GM12878 (cell line): ENCODE measurements at regions of chr3 and their contacts with region 1.

Region 1: DNA sequence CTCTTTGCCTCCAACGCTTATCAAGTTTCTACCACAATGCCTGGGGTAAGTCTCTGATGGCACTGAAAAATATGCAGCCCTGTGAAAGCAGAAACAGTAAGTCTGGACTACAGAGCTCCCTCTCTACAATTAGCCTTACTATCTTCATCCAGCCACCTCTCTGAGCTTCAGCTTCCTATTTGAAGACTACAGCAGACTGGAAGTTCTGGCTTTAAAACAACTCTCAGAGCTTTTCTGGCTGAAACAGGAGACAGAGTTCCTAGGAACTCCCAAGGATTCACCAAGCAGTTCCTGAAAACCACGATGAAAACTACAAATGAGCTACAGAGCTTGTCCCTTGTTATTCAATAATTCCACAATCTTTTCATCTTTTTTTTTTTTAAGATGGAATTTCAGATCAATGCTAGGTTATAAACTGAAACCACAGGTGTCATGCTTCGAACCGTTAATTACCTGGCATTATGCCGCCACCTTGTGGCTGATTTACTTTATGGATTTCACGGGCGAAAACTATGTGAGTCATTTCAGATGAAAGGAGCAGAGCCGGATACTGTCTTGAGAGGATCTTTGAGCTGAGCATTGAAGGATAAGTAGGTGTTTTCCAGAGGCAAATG is 3.9 kb downstream of the CRYGS start:
- DNase-seq: peak; percentile 76
- ATAC-seq: peak; percentile 84
- H3K4me3 ChIP-seq: no peak overlapping the region
- H3K27ac ChIP-seq: peak overlapping the region; percentile 30
- H3K4me1 ChIP-seq: peaks cover 50% of the 10 kb centered on the region
- H3K27me3 ChIP-seq: no peaks in the 10 kb centered on the region
- CTCF ChIP-seq: peak; percentile 48 to 91 (median 72); a peak in 5 of 6 replicates
- EP300 ChIP-seq: no peak
- POLR2A ChIP-seq: no peak
- RAD21 ChIP-seq: peak; percentile 99

Region 2: DNA sequence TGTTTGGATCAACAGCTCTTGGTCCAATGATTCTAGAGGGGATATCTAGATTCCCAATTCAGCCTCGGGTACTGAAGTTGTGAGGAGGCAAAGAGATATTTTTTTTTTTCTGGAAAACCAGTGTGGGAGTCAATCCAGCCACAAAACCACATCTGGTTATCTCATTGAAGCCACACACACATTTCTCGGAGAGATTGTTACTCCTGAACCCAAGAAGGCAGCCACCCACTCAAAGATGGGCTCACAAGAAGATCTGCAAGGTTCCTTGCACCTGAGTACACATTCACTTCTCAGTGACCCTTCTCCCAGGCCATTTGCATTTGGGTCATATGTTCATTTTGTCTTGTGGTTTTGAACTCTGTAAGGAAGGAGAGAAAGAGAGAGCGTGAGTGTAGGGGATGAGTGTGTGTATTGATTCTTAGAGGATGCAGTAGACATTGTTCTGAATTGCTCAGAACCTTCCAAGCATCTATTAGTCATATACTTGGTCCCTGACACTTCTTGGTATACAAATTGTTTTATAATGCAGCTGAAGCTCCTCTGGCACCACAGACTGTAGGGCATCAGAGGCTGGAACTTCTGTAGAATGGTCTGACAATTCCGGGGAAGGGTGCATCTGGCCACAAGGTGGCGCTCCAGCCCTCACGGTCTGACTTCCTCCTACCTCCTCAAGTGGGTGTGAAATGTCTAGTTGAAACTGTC is 563.2 kb before region 1 on chr3:
- CTCF ChIA-PET with region 1: interaction called, 73 read pairs
- POLR2A ChIA-PET with region 1: no interaction called
- RAD21 ChIA-PET with region 1: interaction called, 133 read pairs
- SMC1A ChIA-PET with region 1: interaction called, 85 read pairs
- in situ Hi-C with region 1: loop called (anchors 5 kb)
- intact Hi-C with region 1: no loop called
- DNase-seq: peak; percentile 42
- ATAC-seq: peak; percentile 100
- H3K4me3 ChIP-seq: no peak overlapping the region
- H3K27ac ChIP-seq: no peak overlapping the region
- H3K4me1 ChIP-seq: peaks cover 4% of the 10 kb centered on the region; the same call in 1 of the 2 replicates
- H3K27me3 ChIP-seq: no peaks in the 10 kb centered on the region
- CTCF ChIP-seq: peak; percentile 85 to 93 (median 90)
- EP300 ChIP-seq: no peak
- POLR2A ChIP-seq: no peak
- RAD21 ChIP-seq: peak; percentile 76

Region 3: GRCh38 chr3:186241910-186242821 is 298.2 kb before region 1 on chr3:
- CTCF ChIA-PET with region 1: interaction called, 847 read pairs
- POLR2A ChIA-PET with region 1: no interaction called
- RAD21 ChIA-PET with region 1: interaction called, 13 read pairs
- SMC1A ChIA-PET with region 1: interaction called, 655 read pairs
- in situ Hi-C with region 1: no loop called
- intact Hi-C with region 1: no loop called
- DNase-seq: no peak
- ATAC-seq: peak; percentile 96
- H3K4me3 ChIP-seq: peak overlapping the region; percentile 64
- H3K27ac ChIP-seq: peak overlapping the region; percentile 54
- H3K4me1 ChIP-seq: peaks cover 29% of the 10 kb centered on the region
- H3K27me3 ChIP-seq: no peaks in the 10 kb centered on the region
- CTCF ChIP-seq: peak; percentile 75 to 79 (median 75)
- EP300 ChIP-seq: no peak
- POLR2A ChIP-seq: peak; percentile 42; the same call in 1 of the 2 replicates
- RAD21 ChIP-seq: peak; percentile 89

Region 4: DNA sequence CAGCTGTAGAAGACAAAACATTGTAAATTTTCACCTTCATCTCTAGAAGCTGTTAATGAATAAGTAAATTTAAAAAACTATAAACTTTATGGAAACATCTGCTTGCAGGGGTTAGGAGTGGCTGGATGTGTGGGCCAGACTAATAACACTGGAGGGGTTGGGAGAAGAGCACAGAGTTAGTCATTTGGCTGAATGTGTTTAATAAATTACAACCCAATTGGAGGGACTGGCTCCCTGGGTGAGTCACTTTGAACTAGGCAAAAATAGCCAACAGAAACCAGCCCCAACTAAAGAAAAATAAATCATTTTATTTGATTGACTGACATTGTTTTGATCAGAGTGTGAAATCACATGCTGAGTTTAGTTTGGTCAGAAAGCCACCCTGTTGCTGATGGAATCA is 200.1 kb before region 1 on chr3:
- CTCF ChIA-PET with region 1: interaction called, 16 read pairs
- POLR2A ChIA-PET with region 1: no interaction called
- RAD21 ChIA-PET with region 1: interaction called, 7 read pairs
- SMC1A ChIA-PET with region 1: interaction called, 8 read pairs
- in situ Hi-C with region 1: no loop called
- intact Hi-C with region 1: no loop called
- DNase-seq: no peak
- ATAC-seq: peak; percentile 34; the same call in 1 of the 3 replicates
- H3K4me3 ChIP-seq: no peak overlapping the region
- H3K27ac ChIP-seq: no peak overlapping the region
- H3K4me1 ChIP-seq: peaks cover 7% of the 10 kb centered on the region
- H3K27me3 ChIP-seq: peaks cover 0 to 2% of the 10 kb centered on the region in 2 experiments; a peak in 2 of 4 replicates
- CTCF ChIP-seq: no peak
- EP300 ChIP-seq: no peak
- POLR2A ChIP-seq: no peak
- RAD21 ChIP-seq: no peak

Region 5: DNA sequence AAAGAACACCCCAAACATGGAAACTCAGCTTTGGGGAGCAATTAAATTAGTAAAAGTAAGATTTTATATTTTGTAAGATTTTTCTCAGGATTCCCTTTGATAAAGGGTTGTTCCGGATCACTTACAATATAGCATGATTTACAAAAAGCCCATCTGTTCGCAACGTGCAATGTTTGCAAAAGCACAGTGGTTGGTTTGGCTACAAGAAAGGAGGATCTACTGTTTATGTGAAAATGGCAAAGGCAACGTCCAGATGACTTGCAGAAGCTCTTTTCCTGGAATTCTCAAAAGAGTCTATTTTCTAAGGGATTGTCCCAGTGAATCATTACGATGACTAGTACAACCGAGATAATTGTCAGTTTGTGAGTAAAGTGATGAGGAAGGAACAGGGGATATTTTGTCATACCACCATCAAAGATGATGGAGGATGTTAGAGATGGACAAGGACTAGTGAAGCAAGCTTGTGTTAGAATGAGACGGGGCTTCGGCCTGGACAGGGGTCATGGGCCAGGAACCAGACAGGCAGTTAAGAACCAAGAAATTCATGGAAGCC is 67.8 kb before region 1 on chr3:
- CTCF ChIA-PET with region 1: interaction called, 32 read pairs
- POLR2A ChIA-PET with region 1: no interaction called
- RAD21 ChIA-PET with region 1: interaction called, 25 read pairs
- SMC1A ChIA-PET with region 1: interaction called, 21 read pairs
- in situ Hi-C with region 1: no loop called
- intact Hi-C with region 1: no loop called
- DNase-seq: no peak
- ATAC-seq: no peak
- H3K4me3 ChIP-seq: no peak overlapping the region
- H3K27ac ChIP-seq: no peak overlapping the region
- H3K4me1 ChIP-seq: peaks cover 10% of the 10 kb centered on the region; the same call in 1 of the 2 replicates
- H3K27me3 ChIP-seq: no peaks in the 10 kb centered on the region
- CTCF ChIP-seq: no peak
- EP300 ChIP-seq: no peak
- POLR2A ChIP-seq: no peak
- RAD21 ChIP-seq: no peak

Region 6: GRCh38 chr3:186520957-186521842 is 19.1 kb before region 1 on chr3:
- CTCF ChIA-PET with region 1: interaction called, 282 read pairs
- POLR2A ChIA-PET with region 1: interaction called, 25 read pairs
- RAD21 ChIA-PET with region 1: interaction called, 224 read pairs
- SMC1A ChIA-PET with region 1: interaction called, 429 read pairs
- in situ Hi-C with region 1: no loop called
- intact Hi-C with region 1: no loop called
- DNase-seq: peak; percentile 80
- ATAC-seq: peak; percentile 71
- H3K4me3 ChIP-seq: no peak overlapping the region
- H3K27ac ChIP-seq: peak overlapping the region; percentile 78
- H3K4me1 ChIP-seq: peaks cover 54% of the 10 kb centered on the region
- H3K27me3 ChIP-seq: no peaks in the 10 kb centered on the region
- CTCF ChIP-seq: no peak
- EP300 ChIP-seq: no peak
- POLR2A ChIP-seq: no peak
- RAD21 ChIP-seq: no peak

Region 7: GRCh38 chr3:186609247-186609868 is 69.0 kb after region 1 on chr3:
- CTCF ChIA-PET with region 1: interaction called, 73 read pairs
- POLR2A ChIA-PET with region 1: interaction called, 4 read pairs
- RAD21 ChIA-PET with region 1: interaction called, 41 read pairs
- SMC1A ChIA-PET with region 1: interaction called, 38 read pairs
- in situ Hi-C with region 1: no loop called
- intact Hi-C with region 1: no loop called
- DNase-seq: no peak
- ATAC-seq: peak; percentile 93
- H3K4me3 ChIP-seq: no peak overlapping the region
- H3K27ac ChIP-seq: no peak overlapping the region
- H3K4me1 ChIP-seq: no peaks in the 10 kb centered on the region
- H3K27me3 ChIP-seq: peaks cover 2 to 3% of the 10 kb centered on the region in 2 experiments; a peak in 3 of 4 replicates
- CTCF ChIP-seq: peak; percentile 30 to 50 (median 46); a peak in 5 of 6 replicates
- EP300 ChIP-seq: no peak
- POLR2A ChIP-seq: no peak
- RAD21 ChIP-seq: peak; percentile 38; the same call in 1 of the 2 replicates

Region 8: GRCh38 chr3:187150599-187150998 is 610.3 kb after region 1 on chr3:
- CTCF ChIA-PET with region 1: no interaction called
- POLR2A ChIA-PET with region 1: no interaction called
- RAD21 ChIA-PET with region 1: no interaction called
- SMC1A ChIA-PET with region 1: no interaction called
- in situ Hi-C with region 1: no loop called
- intact Hi-C with region 1: no loop called
- DNase-seq: no peak
- ATAC-seq: peak; percentile 82
- H3K4me3 ChIP-seq: no peak overlapping the region
- H3K27ac ChIP-seq: no peak overlapping the region
- H3K4me1 ChIP-seq: no peaks in the 10 kb centered on the region; the same call in 1 of the 2 replicates
- H3K27me3 ChIP-seq: no peaks in the 10 kb centered on the region; a peak in 1 of 4 replicates
- CTCF ChIP-seq: peak; percentile 41 to 45 (median 43); a peak in 5 of 6 replicates
- EP300 ChIP-seq: no peak
- POLR2A ChIP-seq: no peak
- RAD21 ChIP-seq: peak; percentile 50